ENCODE measurements at regions of chr4 and their contacts with region 1.

Region 1: GRCh38 chr4:16056681-16057385 is 27.0 kb downstream of the PROM1 start:
- DNase-seq: no peak
- ATAC-seq: no peak
- H3K4me3 ChIP-seq: no peak overlapping the region
- H3K27ac ChIP-seq: no peak overlapping the region
- H3K4me1 ChIP-seq: no peaks in the 10 kb centered on the region
- H3K27me3 ChIP-seq: peaks cover 9 to 21% of the 10 kb centered on the region in 2 experiments
- CTCF ChIP-seq: no peak
- EP300 ChIP-seq: no peak
- POLR2A ChIP-seq: no peak
- RAD21 ChIP-seq: no peak

Region 2: GRCh38 chr4:16070203-16070602 is 13.4 kb after region 1 on chr4:
- CTCF ChIA-PET with region 1: no interaction called
- POLR2A ChIA-PET with region 1: interaction called, 12 read pairs
- in situ Hi-C with region 1: no loop called
- intact Hi-C with region 1: no loop called
- DNase-seq: no peak
- ATAC-seq: no peak
- H3K4me3 ChIP-seq: no peak overlapping the region
- H3K27ac ChIP-seq: no peak overlapping the region
- H3K4me1 ChIP-seq: no peaks in the 10 kb centered on the region; a peak in 2 of 5 replicates
- H3K27me3 ChIP-seq: peaks cover 0 to 20% of the 10 kb centered on the region in 2 experiments; a peak in 3 of 5 replicates
- CTCF ChIP-seq: no peak
- EP300 ChIP-seq: no peak
- POLR2A ChIP-seq: no peak
- RAD21 ChIP-seq: no peak

Region 3: GRCh38 chr4:16150716-16151115 is 93.9 kb after region 1 on chr4:
- CTCF ChIA-PET with region 1: no interaction called
- POLR2A ChIA-PET with region 1: no interaction called
- in situ Hi-C with region 1: no loop called
- intact Hi-C with region 1: no loop called
- DNase-seq: no peak
- ATAC-seq: no peak
- H3K4me3 ChIP-seq: no peak overlapping the region
- H3K27ac ChIP-seq: no peak overlapping the region
- H3K4me1 ChIP-seq: no peaks in the 10 kb centered on the region
- H3K27me3 ChIP-seq: 0 out of 5 replicates have a peak, but pooled peaks cover 0 to 8% of the 10 kb centered on the region in 2 experiments
- CTCF ChIP-seq: no peak
- EP300 ChIP-seq: no peak
- POLR2A ChIP-seq: no peak
- RAD21 ChIP-seq: no peak

Region 4: GRCh38 chr4:17366496-17366895 is 1309.7 kb after region 1 on chr4:
- CTCF ChIA-PET with region 1: no interaction called
- POLR2A ChIA-PET with region 1: no interaction called
- in situ Hi-C with region 1: no loop called
- intact Hi-C with region 1: no loop called
- DNase-seq: no peak
- ATAC-seq: no peak
- H3K4me3 ChIP-seq: no peak overlapping the region
- H3K27ac ChIP-seq: no peak overlapping the region
- H3K4me1 ChIP-seq: no peaks in the 10 kb centered on the region
- H3K27me3 ChIP-seq: no peaks in the 10 kb centered on the region
- CTCF ChIP-seq: no peak
- EP300 ChIP-seq: no peak
- POLR2A ChIP-seq: no peak
- RAD21 ChIP-seq: no peak